Pancreas (tissue), 10 donors: ENCODE measurements at regions of chr1 and their contacts with region 1.

Region 1: DNA sequence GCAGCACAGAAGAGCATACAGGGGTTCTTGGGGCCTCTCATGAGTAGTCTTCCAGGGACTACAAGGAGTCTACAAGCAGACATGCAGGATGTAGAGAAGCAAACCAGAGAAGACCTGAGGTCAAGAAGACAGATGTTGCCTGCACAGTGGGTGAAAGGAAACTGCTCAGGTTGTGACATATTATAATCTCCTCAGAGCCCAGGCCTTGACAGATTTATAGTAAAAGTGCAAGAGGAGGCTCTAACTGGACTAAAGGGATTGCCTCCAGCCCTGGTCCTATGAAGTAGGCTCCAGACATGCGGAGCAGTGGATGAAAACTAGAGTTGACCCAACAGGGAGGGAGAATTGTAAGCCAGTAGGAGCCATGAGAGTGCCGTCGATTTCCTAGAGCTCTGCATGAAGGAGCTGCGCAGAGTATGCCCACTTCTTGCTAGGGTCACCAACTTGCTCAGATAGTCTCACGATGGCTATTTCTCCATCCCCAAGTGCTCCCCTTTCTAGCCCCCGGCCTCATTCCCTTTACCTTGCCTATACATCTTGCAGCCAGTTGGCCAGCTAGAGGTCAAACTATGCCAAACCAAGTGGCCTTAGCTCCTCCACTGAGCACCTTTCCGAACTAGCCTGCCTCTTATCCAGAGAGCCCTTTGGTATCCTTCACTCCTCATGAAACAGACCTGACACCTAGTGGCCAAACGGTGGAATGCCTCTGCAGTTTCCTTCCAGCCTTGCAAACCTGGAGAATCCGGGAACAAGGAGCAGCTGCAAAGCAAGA is 36.2 kb upstream of the IPO9 start:
- DNase-seq: peak; percentile 68 to 88 (median 70)
- ATAC-seq: peak; percentile 93 to 98 (median 96)
- H3K4me3 ChIP-seq: no peak overlapping the region
- H3K27ac ChIP-seq: no peak overlapping the region
- H3K4me1 ChIP-seq: no peaks in the 10 kb centered on the region
- H3K27me3 ChIP-seq: no peaks in the 10 kb centered on the region
- CTCF ChIP-seq: peak; percentile 86 to 92 (median 90)

Region 2: DNA sequence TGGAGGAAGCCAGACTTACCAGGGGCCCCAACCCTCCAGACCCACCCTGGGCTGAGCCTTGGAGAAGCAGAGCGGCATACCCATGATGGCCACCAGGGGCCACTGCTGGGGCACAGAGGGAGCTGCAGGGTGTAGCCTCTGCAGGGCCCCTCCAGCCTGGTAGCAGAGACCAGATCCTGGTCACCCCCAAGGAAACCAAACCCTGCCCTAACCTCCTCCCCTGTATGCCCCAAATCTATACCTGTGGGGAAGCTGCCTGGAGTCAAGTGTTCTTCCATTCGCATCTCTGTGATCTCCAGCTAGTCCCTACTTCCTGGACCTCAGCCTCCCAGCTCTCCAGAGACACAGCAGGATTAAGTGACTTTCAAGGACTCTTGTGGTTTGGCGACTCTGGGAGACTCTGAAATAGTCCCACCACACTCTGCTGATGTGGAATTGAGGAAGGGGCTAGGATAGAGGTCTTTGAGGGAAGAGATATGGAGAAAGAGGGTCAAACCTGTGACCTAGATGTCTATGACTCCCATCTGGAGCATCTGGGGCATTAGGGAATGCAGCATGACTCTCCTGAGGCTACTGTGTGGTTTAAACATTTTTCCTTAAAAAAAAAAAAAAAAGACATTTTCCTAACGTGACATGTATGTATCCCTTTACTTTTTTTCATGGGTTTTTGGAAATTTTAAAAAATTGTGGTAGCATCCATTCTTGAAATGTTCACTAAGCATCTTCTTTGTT is 83.0 kb before region 1 on chr1:
- intact Hi-C with region 1: loop called (anchors 5 kb)
- DNase-seq: peak; percentile 45 to 88 (median 69)
- ATAC-seq: peak; percentile 33 to 76 (median 68)
- H3K4me3 ChIP-seq: no peak overlapping the region
- H3K27ac ChIP-seq: no peak overlapping the region
- H3K4me1 ChIP-seq: peaks cover 0 to 25% (median 20%) of the 10 kb centered on the region in 3 donors
- H3K27me3 ChIP-seq: no peaks in the 10 kb centered on the region
- CTCF ChIP-seq: peak; percentile 85 to 91 (median 86)